Heart left ventricle (tissue), 16 donors: ENCODE measurements at regions of chr14 and their contacts with region 1.

Region 1: DNA sequence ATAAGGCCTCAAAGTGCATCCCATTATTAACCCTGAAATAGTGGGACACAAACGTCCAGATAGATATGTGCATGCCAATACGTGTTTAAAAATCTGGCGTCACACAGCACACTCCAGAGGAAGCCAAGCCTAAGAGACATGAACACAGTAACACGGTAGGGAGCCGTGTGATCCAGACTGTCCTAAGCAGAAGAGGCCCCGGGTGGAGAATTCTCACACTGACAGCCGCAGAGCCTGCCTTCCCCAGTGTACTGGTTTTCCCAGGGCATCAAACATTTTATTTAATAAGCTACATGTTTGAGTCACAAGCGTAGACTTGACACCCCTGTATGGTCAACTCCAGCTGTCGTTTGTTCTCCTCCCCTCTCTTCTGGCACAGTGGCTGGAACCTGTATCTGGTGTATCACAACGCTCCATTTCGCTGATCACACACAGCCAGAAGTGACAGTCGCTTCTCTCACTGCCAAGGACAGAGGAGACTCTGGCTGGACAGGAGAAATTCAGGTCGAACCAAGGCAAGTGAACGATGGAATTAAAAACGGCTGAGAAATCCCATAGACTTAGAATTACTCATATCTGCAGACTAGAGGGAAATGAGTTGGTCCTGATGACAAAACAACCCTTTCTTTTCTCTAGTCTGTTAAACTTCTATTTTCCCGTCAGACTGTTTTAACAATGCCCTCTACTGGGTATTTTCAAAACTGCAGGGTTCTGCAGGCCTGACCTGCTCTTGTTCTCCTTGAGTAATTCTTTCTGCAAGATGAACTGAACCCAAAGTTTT is 359.9 kb downstream of the RGS6 start:
- DNase-seq: peak in 4 of 5 donors; percentile 16 to 33 (median 23)
- ATAC-seq: peak; percentile 71 to 87 (median 82)
- H3K4me3 ChIP-seq: peak overlapping the region in 8 of 12 donors; percentile 8 to 51 (median 28)
- H3K27ac ChIP-seq: peak overlapping the region in 2 of 12 donors; percentile 6 to 28
- H3K4me1 ChIP-seq: peaks cover 0 to 8% (median 0%) of the 10 kb centered on the region in 12 donors
- H3K27me3 ChIP-seq: peaks cover 0 to 3% (median 0%) of the 10 kb centered on the region in 9 donors
- CTCF ChIP-seq: peak; percentile 66 to 85 (median 80)
- POLR2A ChIP-seq: no peak

Region 2: GRCh38 chr14:72023722-72024407 is 268.2 kb before region 1 on chr14:
- intact Hi-C with region 1: loop called (anchors 1 to 10 kb)
- DNase-seq: peak in 2 of 5 donors; percentile 19 to 20
- ATAC-seq: peak in 3 of 4 donors; percentile 58 to 63 (median 61)
- H3K4me3 ChIP-seq: no peak overlapping the region
- H3K27ac ChIP-seq: peak overlapping the region in 1 of 12 donors; percentile 37
- H3K4me1 ChIP-seq: peaks cover 0 to 24% (median 13%) of the 10 kb centered on the region in 12 donors
- H3K27me3 ChIP-seq: no peaks in the 10 kb centered on the region
- CTCF ChIP-seq: peak; percentile 45 to 72 (median 62)
- POLR2A ChIP-seq: no peak

Region 3: GRCh38 chr14:72104011-72104613 is 188.0 kb before region 1 on chr14:
- intact Hi-C with region 1: loop called in 1 of 10 experiments (anchors 10 kb)
- DNase-seq: no peak
- ATAC-seq: no peak
- H3K4me3 ChIP-seq: no peak overlapping the region
- H3K27ac ChIP-seq: no peak overlapping the region
- H3K4me1 ChIP-seq: peaks cover 0 to 15% (median 0%) of the 10 kb centered on the region in 12 donors
- H3K27me3 ChIP-seq: no peaks in the 10 kb centered on the region
- CTCF ChIP-seq: peak; percentile 9 to 52 (median 40)
- POLR2A ChIP-seq: no peak

Region 4: GRCh38 chr14:72142328-72142727 is 149.8 kb before region 1 on chr14:
- intact Hi-C with region 1: loop called in 1 of 10 experiments (anchors 5 kb)
- DNase-seq: peak in 1 of 5 donors; percentile 20
- ATAC-seq: peak in 1 of 4 donors; percentile 64
- H3K4me3 ChIP-seq: no peak overlapping the region
- H3K27ac ChIP-seq: no peak overlapping the region
- H3K4me1 ChIP-seq: no peaks in the 10 kb centered on the region
- H3K27me3 ChIP-seq: no peaks in the 10 kb centered on the region
- CTCF ChIP-seq: no peak
- POLR2A ChIP-seq: no peak

Region 5: DNA sequence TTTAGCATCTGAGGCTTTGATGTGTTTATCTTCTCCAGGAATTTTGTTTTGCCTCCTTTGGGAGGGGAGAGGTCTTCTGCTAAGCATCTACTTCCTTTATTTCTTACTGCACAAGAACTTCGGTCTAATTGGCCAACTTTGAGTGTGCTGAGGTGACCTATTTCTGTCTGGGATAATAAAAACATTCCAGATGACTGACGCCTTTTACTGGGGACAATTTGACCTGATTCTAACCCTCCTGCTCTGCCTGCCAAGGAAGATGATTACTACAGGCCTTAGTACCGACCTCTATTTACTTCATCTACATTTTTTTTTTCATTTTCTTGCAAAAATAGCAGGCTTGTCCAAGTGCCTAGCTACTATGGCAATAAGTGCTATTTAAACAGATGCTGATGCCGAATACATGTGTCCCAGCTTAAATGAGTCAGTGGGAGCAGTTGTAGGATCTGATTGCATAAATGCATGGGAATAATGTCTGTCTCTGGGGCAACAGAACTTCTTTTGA is 105.6 kb before region 1 on chr14:
- intact Hi-C with region 1: loop called in 1 of 10 experiments (anchors 5 kb)
- DNase-seq: peak in 3 of 5 donors; percentile 8 to 29 (median 24)
- ATAC-seq: peak; percentile 91 to 96 (median 94)
- H3K4me3 ChIP-seq: no peak overlapping the region
- H3K27ac ChIP-seq: peak overlapping the region in 10 of 12 donors; percentile 9 to 71 (median 35)
- H3K4me1 ChIP-seq: peaks cover 0 to 27% (median 15%) of the 10 kb centered on the region in 12 donors
- H3K27me3 ChIP-seq: no peaks in the 10 kb centered on the region
- CTCF ChIP-seq: no peak
- POLR2A ChIP-seq: no peak

Region 6: GRCh38 chr14:72420725-72421474 is 128.8 kb after region 1 on chr14:
- intact Hi-C with region 1: loop called in 2 of 10 experiments (anchors 2 to 5 kb)
- DNase-seq: peak; percentile 49 to 78 (median 63)
- ATAC-seq: peak in 3 of 4 donors; percentile 35 to 52 (median 47)
- H3K4me3 ChIP-seq: no peak overlapping the region
- H3K27ac ChIP-seq: no peak overlapping the region
- H3K4me1 ChIP-seq: peaks cover 0 to 3% (median 0%) of the 10 kb centered on the region in 12 donors
- H3K27me3 ChIP-seq: no peaks in the 10 kb centered on the region
- CTCF ChIP-seq: peak; percentile 82 to 98 (median 91)
- POLR2A ChIP-seq: no peak